Mammary epithelial cell (primary cell): ENCODE measurements at regions of chr2 and their contacts with region 1.

Region 1: GRCh38 chr2:11028406-11028916 is 116.7 kb downstream of the KCNF1 start:
- DNase-seq: no peak
- H3K4me3 ChIP-seq: no peak overlapping the region
- H3K27ac ChIP-seq: no peak overlapping the region
- H3K4me1 ChIP-seq: no peaks in the 10 kb centered on the region
- H3K27me3 ChIP-seq: peaks cover 2% of the 10 kb centered on the region
- CTCF ChIP-seq: peak; percentile 20 to 47

Region 2: DNA sequence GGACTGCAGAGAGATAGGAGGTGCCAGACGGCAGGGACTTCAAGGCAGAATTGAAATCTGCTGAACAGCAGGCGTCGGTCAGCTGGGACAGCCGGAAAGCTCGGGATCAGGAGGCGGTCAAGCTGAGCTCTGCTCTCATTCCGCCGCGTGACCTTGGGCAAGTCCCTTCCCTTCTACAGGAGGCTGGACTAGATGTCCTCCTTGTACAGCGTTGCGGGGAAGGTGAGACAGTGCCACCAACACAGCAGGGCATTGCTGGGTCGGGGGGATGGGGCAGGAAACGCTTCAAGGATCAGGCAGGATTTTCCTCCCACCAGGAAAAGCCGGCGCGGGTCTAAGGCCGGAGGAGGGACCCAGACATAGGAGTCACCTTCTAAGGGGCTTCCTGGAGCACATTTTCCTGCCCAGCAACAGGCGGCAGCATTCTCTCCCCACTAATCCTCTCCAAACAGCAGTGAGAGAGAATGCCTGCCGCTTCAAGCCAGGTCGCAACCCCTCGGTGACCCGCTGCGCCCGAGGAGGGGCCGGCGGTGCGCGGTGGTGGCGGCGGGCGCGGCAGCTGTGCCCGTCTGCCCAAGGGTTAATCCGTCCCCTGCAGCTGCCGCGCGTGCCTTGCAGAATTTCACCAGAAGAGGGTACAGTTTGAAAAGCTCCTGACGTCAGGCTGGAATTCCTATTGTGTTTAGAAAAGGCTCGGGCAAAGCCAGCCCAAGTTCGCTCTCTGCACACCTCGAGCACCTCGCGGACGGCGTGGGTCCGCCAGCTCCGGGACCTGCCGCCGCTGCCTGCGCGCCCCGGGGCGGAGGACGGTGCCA is 117.0 kb before region 1 on chr2 and contains the start of gene KCNF1:
- CTCF ChIA-PET with region 1: no interaction called
- dilution Hi-C with region 1: no loop called
- in situ Hi-C with region 1: no loop called
- intact Hi-C with region 1: loop called (anchors 1 kb)
- DNase-seq: peak; percentile 58
- H3K4me3 ChIP-seq: peak within 1 kb of the TSS; percentile 1 to 43 (median 32)
- H3K27ac ChIP-seq: no peak within 1 kb of the TSS
- H3K4me1 ChIP-seq: no peaks in the 10 kb centered on the region
- H3K27me3 ChIP-seq: peaks cover 9% of the 10 kb centered on the region
- CTCF ChIP-seq: peak; percentile 23 to 49
- total RNA-seq, gene KCNF1: 0.54 to 2.5 TPM